ENCODE measurements at regions of chrX and their contacts with region 1.

Region 1: GRCh38 chrX:44025555-44025954 is 52.4 kb upstream of the NDP start:
- H3K4me3 ChIP-seq: no peak overlapping the region
- H3K27ac ChIP-seq: no peak overlapping the region
- H3K4me1 ChIP-seq: no peaks in the 10 kb centered on the region
- CTCF ChIP-seq: no peak

Region 2: GRCh38 chrX:43939187-43939926 is 86.2 kb before region 1 on chrX:
- CTCF ChIA-PET with region 1: no interaction called
- POLR2A ChIA-PET with region 1: no interaction called
- H3K4me3 ChIP-seq: no peak overlapping the region
- H3K27ac ChIP-seq: no peak overlapping the region
- H3K4me1 ChIP-seq: no peaks in the 10 kb centered on the region
- CTCF ChIP-seq: no peak

Region 3: GRCh38 chrX:44003975-44004374 is 21.6 kb before region 1 on chrX:
- CTCF ChIA-PET with region 1: no interaction called
- POLR2A ChIA-PET with region 1: no interaction called
- H3K4me3 ChIP-seq: no peak overlapping the region
- H3K27ac ChIP-seq: no peak overlapping the region
- H3K4me1 ChIP-seq: no peaks in the 10 kb centered on the region
- CTCF ChIP-seq: no peak

Region 4: DNA sequence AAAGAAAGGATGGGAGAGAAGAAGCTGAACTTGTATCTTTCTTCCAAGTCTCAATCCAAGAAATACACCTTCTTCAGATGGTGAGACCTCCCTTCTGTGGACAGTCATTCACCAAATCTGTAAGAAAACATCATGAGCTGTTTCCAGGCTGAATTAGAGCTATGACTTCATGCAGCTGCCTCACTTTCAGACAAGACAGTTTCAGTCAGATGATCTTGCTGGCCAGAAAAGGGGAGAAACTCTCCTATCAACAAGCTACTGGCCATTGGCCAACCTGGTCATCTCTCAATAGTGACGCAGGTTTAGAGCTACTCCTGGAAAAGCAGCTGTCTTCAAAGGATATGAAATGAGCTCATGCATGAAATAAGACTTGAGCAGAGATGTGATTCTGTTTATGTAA is 17.2 kb after region 1 on chrX:
- CTCF ChIA-PET with region 1: interaction called, 11 read pairs
- POLR2A ChIA-PET with region 1: no interaction called
- H3K4me3 ChIP-seq: no peak overlapping the region
- H3K27ac ChIP-seq: no peak overlapping the region
- H3K4me1 ChIP-seq: no peaks in the 10 kb centered on the region
- CTCF ChIP-seq: no peak

Measured in HEK293 (cell line).